WTC11 (cell line): ENCODE measurements at regions of chr3 and their contacts with region 1.

Region 1: GRCh38 chr3:57130571-57131209 is 34.5 kb downstream of the IL17RD start:
- DNase-seq: peak; percentile 96
- ATAC-seq: peak; percentile 83
- H3K4me3 Mint-ChIP-seq: peak overlapping the region; percentile 58
- H3K27ac Mint-ChIP-seq: peak overlapping the region; percentile 100
- H3K4me1 Mint-ChIP-seq: peaks cover 92% of the 10 kb centered on the region
- H3K27me3 Mint-ChIP-seq: peaks cover 8% of the 10 kb centered on the region
- CTCF ChIP-seq: no peak

Region 2: GRCh38 chr3:57112206-57112605 is 18.5 kb before region 1 on chr3:
- CTCF ChIA-PET with region 1: interaction called, 35 read pairs
- POLR2A ChIA-PET with region 1: no interaction called
- DNase-seq: peak; percentile 34
- ATAC-seq: no peak; the same call in 1 of the 2 replicates
- H3K4me3 Mint-ChIP-seq: no peak overlapping the region
- H3K27ac Mint-ChIP-seq: peak overlapping the region; percentile 11; the same call in 1 of the 2 replicates
- H3K4me1 Mint-ChIP-seq: peaks cover 56% of the 10 kb centered on the region
- H3K27me3 Mint-ChIP-seq: no peaks in the 10 kb centered on the region
- CTCF ChIP-seq: no peak

Region 3: GRCh38 chr3:57158813-57159738 is 28.4 kb after region 1 on chr3:
- CTCF ChIA-PET with region 1: interaction called, 20 read pairs
- POLR2A ChIA-PET with region 1: interaction called, 22 read pairs
- DNase-seq: peak; percentile 31
- ATAC-seq: peak; percentile 65
- H3K4me3 Mint-ChIP-seq: peak overlapping the region; percentile 22
- H3K27ac Mint-ChIP-seq: peak overlapping the region; percentile 96
- H3K4me1 Mint-ChIP-seq: peaks cover 93% of the 10 kb centered on the region
- H3K27me3 Mint-ChIP-seq: peaks cover 16% of the 10 kb centered on the region
- CTCF ChIP-seq: no peak

Region 4: GRCh38 chr3:57164657-57165573 is 34.2 kb after region 1 on chr3 and contains the start of gene IL17RD:
- CTCF ChIA-PET with region 1: interaction called, 20 read pairs
- POLR2A ChIA-PET with region 1: interaction called, 22 read pairs
- DNase-seq: peak; percentile 88
- ATAC-seq: peak; percentile 65
- H3K4me3 Mint-ChIP-seq: peak within 1 kb of the TSS; percentile 91
- H3K27ac Mint-ChIP-seq: 0 out of 2 replicates have a peak within 1 kb of the TSS, but pooled peaks have one; percentile 33
- H3K4me1 Mint-ChIP-seq: peaks cover 59% of the 10 kb centered on the region
- H3K27me3 Mint-ChIP-seq: peaks cover 32% of the 10 kb centered on the region
- CTCF ChIP-seq: no peak
- total RNA-seq, gene IL17RD: 59.1 to 72.9 TPM (median 66.0 TPM) in 3 replicates